ENCODE measurements at regions of chr19 and their contacts with region 1.

Region 1: DNA sequence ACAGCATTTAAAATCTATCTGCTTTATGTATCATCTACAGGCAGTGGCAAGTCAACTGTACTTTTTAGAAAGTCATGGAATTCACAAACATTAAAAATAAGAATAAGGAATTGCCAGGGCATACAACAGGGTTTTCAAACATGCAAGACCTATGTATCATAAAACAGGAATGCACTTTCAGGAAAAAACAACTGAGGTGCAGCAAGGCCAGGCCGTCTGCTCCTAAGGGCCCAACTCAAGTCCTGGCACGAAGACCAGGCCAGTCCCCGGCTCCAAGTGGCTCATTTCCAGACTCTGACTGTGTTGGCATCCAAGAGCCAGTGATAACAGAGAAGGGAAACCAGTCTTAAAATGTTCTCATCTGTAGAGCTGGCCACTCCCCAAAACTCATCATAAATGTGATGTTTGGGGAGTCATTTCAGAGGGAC is 7.1 kb downstream of the RFX2 start:
- DNase-seq: peak; percentile 61 to 78
- ATAC-seq: peak; percentile 73 to 90 (median 82)
- H3K4me3 ChIP-seq: no peak overlapping the region
- H3K27ac ChIP-seq: peak overlapping the region; percentile 5 to 80 (median 67)
- H3K4me1 ChIP-seq: peaks cover 5 to 75% (median 56%) of the 10 kb centered on the region in 9 donors
- H3K27me3 ChIP-seq: no peaks in the 10 kb centered on the region
- CTCF ChIP-seq: no peak

Region 2: GRCh38 chr19:6056801-6057650 is 46.2 kb before region 1 on chr19:
- intact Hi-C with region 1: loop called in 7 of 10 experiments (anchors 2 to 5 kb)
- DNase-seq: peak; percentile 60 to 84
- ATAC-seq: peak; percentile 72 to 92 (median 88)
- H3K4me3 ChIP-seq: peak overlapping the region in 6 of 10 donors; percentile 18 to 31 (median 22)
- H3K27ac ChIP-seq: peak overlapping the region; percentile 86 to 95 (median 91)
- H3K4me1 ChIP-seq: peaks cover 26 to 67% (median 46%) of the 10 kb centered on the region in 9 donors
- H3K27me3 ChIP-seq: no peaks in the 10 kb centered on the region
- CTCF ChIP-seq: peak in 1 of 9 donors; percentile 38

Region 3: DNA sequence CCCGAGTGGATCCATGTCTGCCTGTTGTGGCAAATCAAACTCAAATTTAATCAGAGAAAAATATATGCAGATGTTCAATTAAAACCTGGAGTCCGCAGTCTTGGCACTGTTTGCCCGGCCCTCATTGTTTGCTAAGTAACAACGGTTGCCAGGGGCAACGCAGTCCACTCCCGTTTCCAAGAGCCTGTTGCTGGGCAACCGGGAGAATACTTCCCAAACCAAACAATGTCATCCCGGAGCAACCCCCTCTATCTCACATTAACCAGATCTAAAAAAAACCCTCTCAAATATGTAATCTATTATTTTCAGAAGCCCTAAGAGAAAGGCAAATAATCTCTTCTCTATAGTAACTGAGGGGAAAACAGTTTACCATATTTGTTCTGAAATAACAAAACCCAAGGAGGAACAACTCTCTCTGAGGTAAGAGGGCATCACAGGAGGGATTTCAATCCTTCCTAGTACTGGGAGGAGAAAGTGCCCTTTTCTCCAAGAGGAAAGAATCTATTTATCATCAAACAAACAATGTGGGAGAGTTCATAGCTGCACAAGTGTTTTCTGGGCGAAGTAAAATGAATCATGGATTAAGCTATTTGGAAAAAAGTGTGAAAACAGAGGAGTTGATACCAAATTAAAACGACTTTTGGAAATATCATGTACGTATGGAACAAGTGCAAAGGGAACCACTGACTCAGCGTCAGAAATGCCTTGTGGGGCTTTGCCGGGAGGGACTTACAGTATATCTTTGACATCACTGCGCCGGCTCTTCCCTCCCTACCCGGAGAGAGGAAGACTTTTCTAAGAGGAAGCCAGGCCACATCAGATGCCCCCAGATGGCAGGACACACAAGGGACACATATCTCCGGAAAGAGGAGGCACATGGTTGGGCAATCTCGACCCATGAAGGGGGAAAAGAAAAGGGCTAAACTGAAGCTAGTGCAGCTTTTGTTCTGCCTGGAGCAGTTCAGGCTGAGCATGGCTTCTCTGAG is 36.3 kb before region 1 on chr19:
- intact Hi-C with region 1: loop called in 7 of 10 experiments (anchors 2 to 5 kb)
- DNase-seq: peak; percentile 91 to 97
- ATAC-seq: peak; percentile 79 to 94 (median 90)
- H3K4me3 ChIP-seq: peak overlapping the region in 4 of 10 donors; percentile 1 to 24 (median 14)
- H3K27ac ChIP-seq: peak overlapping the region; percentile 46 to 93 (median 88)
- H3K4me1 ChIP-seq: peaks cover 17 to 77% (median 64%) of the 10 kb centered on the region in 9 donors
- H3K27me3 ChIP-seq: no peaks in the 10 kb centered on the region
- CTCF ChIP-seq: no peak